ENCODE measurements at regions of chr11 and their contacts with region 1.

Region 1: GRCh38 chr11:117232092-117232878 is at the start of gene RNF214:
- DNase-seq: peak; percentile 61
- ATAC-seq: peak; percentile 89
- H3K4me3 ChIP-seq: peak within 1 kb of the TSS; percentile 99
- H3K27ac ChIP-seq: peak within 1 kb of the TSS; percentile 98
- H3K4me1 ChIP-seq: peaks cover 7% of the 10 kb centered on the region
- H3K27me3 ChIP-seq: no peaks in the 10 kb centered on the region
- CTCF ChIP-seq: peak; percentile 95
- POLR2A ChIP-seq: peak; percentile 74
- RAD21 ChIP-seq: peak; percentile 64
- total RNA-seq, gene RNF214: 7.5 and 7.9 TPM in 2 replicates

Region 2: DNA sequence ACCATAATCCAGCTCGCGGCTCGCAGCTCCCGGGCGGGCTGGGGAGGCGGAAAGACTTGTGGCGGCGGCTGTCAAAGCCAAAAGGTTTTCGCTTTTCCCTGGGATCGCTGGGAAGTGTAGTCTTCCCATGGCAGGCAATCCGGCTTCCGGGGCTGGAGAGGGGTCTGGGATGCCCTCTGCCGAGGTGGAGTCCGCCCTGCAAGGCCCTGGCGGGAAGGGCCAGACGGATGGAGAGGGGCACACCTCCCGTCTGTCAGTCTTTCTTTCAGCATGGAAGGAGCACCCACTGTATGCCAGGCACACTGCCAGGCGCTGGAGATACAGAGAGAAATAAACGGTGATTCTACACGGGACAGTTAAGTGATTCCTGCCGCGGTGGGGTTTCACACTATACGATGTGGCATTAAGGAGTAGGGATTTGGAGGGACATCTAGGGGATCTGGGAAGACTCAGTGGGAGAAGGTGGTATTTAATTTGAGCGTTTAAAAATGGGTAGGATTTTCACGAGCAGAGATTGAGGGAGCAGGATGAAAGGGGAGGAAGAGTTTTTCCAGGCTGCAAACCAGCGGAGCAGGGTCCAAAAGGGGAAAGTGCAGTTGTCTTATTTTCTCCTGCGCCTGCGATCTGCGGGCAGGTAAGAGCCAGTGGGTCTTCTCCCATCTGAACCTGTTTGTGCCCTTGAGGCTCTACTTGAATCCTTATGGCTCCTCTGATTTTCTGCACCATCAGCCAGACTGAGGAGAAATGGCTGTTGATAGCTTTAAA is 84.1 kb after region 1 on chr11 and contains the start of gene BACE1:
- CTCF ChIA-PET with region 1: no interaction called
- POLR2A ChIA-PET with region 1: no interaction called
- dilution Hi-C with region 1: no loop called
- in situ Hi-C with region 1: loop called (anchors 5 kb)
- intact Hi-C with region 1: loop called (anchors 1 kb)
- DNase-seq: peak; percentile 80
- ATAC-seq: peak; percentile 94
- H3K4me3 ChIP-seq: peak within 1 kb of the TSS; percentile 56
- H3K27ac ChIP-seq: peak within 1 kb of the TSS; percentile 73
- H3K4me1 ChIP-seq: peaks cover 11% of the 10 kb centered on the region
- H3K27me3 ChIP-seq: no peaks in the 10 kb centered on the region
- CTCF ChIP-seq: peak; percentile 58
- POLR2A ChIP-seq: no peak
- RAD21 ChIP-seq: peak; percentile 61
- total RNA-seq, gene BACE1: 27.6 and 29.2 TPM in 2 replicates

Region 3: GRCh38 chr11:117621226-117621625 is 388.9 kb after region 1 on chr11:
- CTCF ChIA-PET with region 1: no interaction called
- POLR2A ChIA-PET with region 1: no interaction called
- dilution Hi-C with region 1: no loop called
- in situ Hi-C with region 1: no loop called
- intact Hi-C with region 1: loop called (anchors 10 kb)
- DNase-seq: peak; percentile 18
- ATAC-seq: peak; percentile 48; the same call in 1 of the 2 replicates
- H3K4me3 ChIP-seq: no peak overlapping the region
- H3K27ac ChIP-seq: no peak overlapping the region
- H3K4me1 ChIP-seq: no peaks in the 10 kb centered on the region
- H3K27me3 ChIP-seq: peaks cover 3% of the 10 kb centered on the region
- CTCF ChIP-seq: peak; percentile 61
- POLR2A ChIP-seq: no peak
- RAD21 ChIP-seq: peak; percentile 49